ENCODE measurements at regions of chr12 and their contacts with region 1.

Region 1: GRCh38 chr12:108514973-108515814 is at the start of gene FICD:
- DNase-seq: peak; percentile 96 to 100 (median 99)
- ATAC-seq: peak; percentile 93
- H3K4me3 ChIP-seq: peak within 1 kb of the TSS; percentile 99
- H3K4me3 Mint-ChIP-seq: peak within 1 kb of the TSS; percentile 96
- H3K27ac ChIP-seq: peak within 1 kb of the TSS; percentile 70 to 71
- H3K27ac Mint-ChIP-seq: peak within 1 kb of the TSS; percentile 87
- H3K4me1 ChIP-seq: peaks cover 34% of the 10 kb centered on the region
- H3K4me1 Mint-ChIP-seq: peaks cover 29% of the 10 kb centered on the region
- H3K27me3 ChIP-seq: no peaks in the 10 kb centered on the region
- H3K27me3 Mint-ChIP-seq: no peaks in the 10 kb centered on the region
- CTCF ChIP-seq: no peak
- total RNA-seq, gene FICD: 2.7 to 3.2 TPM

Region 2: DNA sequence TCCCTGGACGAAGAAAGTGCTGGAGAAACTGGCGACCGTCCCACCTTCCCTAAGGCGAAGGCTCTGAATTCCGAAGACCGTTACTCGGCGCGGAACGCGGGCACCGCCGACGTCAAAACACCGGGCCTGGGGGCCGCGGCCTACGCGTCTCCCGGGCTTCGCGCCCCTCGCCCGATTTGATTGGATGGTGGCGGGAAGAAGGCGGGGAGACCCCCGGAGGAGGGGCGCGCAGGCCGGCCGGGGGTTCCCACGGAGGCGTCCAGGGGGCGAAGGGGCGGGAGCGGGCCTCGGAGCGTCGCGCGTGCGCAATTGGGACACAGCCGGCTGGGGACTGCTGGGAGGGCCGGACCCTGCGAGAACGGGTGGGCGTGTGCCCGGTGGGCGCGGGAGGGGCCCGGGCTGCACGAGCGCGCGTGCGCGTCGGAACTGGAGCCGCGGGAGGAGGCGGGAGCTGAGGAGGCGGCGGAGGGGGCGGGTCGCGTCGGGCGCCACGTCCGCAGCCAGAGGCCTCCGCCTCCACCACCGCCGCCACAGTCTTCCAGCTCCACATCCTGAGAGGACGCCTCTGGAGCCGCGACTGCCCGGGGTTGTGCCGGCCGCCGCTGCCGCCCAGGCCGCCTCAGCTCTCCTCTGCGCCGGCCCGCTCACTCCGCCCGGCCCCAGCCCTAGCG is 1559.7 kb before region 1 on chr12 and contains the start of gene TMEM263:
- CTCF ChIA-PET with region 1: no interaction called
- POLR2A ChIA-PET with region 1: no interaction called
- intact Hi-C with region 1: loop called in 1 of 2 experiments (anchors 10 kb)
- DNase-seq: peak; percentile 74 to 97 (median 88)
- ATAC-seq: peak; percentile 73
- H3K4me3 ChIP-seq: peak within 1 kb of the TSS; percentile 77
- H3K4me3 Mint-ChIP-seq: peak within 1 kb of the TSS; percentile 98
- H3K27ac ChIP-seq: peak within 1 kb of the TSS; percentile 81 to 89
- H3K27ac Mint-ChIP-seq: peak within 1 kb of the TSS; percentile 98
- H3K4me1 ChIP-seq: peaks cover 13% of the 10 kb centered on the region
- H3K4me1 Mint-ChIP-seq: peaks cover 43% of the 10 kb centered on the region
- H3K27me3 ChIP-seq: no peaks in the 10 kb centered on the region
- H3K27me3 Mint-ChIP-seq: no peaks in the 10 kb centered on the region
- CTCF ChIP-seq: no peak
- total RNA-seq, gene TMEM263: 33.2 to 33.4 TPM

Region 3: GRCh38 chr12:107685360-107686248 is 829.6 kb before region 1 on chr12 and contains the start of gene PWP1:
- CTCF ChIA-PET with region 1: no interaction called
- POLR2A ChIA-PET with region 1: no interaction called
- intact Hi-C with region 1: loop called in 1 of 2 experiments (anchors 2 kb)
- DNase-seq: peak; percentile 91 to 99 (median 94)
- ATAC-seq: peak; percentile 90
- H3K4me3 ChIP-seq: peak within 1 kb of the TSS; percentile 99
- H3K4me3 Mint-ChIP-seq: peak within 1 kb of the TSS; percentile 97
- H3K27ac ChIP-seq: peak within 1 kb of the TSS; percentile 75 to 91
- H3K27ac Mint-ChIP-seq: peak within 1 kb of the TSS; percentile 94
- H3K4me1 ChIP-seq: peaks cover 24% of the 10 kb centered on the region
- H3K4me1 Mint-ChIP-seq: peaks cover 33% of the 10 kb centered on the region
- H3K27me3 ChIP-seq: no peaks in the 10 kb centered on the region
- H3K27me3 Mint-ChIP-seq: no peaks in the 10 kb centered on the region
- CTCF ChIP-seq: no peak
- total RNA-seq, gene PWP1: 24.1 to 24.2 TPM

Region 4: DNA sequence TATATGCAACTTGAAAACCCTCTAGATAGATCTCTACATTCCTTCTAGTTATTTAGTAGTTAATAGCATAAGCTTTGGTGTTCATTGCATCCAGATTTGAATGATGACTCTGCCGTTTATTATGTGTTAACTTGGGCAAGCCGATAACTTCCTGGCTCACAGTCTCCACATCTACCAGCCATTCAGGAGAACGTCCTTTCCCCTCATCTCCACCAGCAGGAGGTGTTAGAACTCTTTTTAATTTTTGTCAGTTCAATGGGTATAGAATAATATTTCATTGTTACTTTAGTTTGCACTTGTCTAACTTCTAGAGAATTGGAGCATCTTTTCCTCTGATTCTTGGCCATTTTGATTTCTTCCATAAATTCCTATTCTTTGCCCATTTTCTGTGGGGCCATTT is 416.1 kb before region 1 on chr12:
- CTCF ChIA-PET with region 1: no interaction called
- POLR2A ChIA-PET with region 1: no interaction called
- intact Hi-C with region 1: loop called (anchors 1 to 5 kb)
- DNase-seq: peak in 2 of 14 experiments; percentile 7 to 40
- ATAC-seq: no peak
- H3K4me3 ChIP-seq: no peak overlapping the region
- H3K4me3 Mint-ChIP-seq: no peak overlapping the region
- H3K27ac ChIP-seq: no peak overlapping the region
- H3K27ac Mint-ChIP-seq: no peak overlapping the region
- H3K4me1 ChIP-seq: no peaks in the 10 kb centered on the region
- H3K4me1 Mint-ChIP-seq: no peaks in the 10 kb centered on the region
- H3K27me3 ChIP-seq: peaks cover 0 to 2% of the 10 kb centered on the region in 2 experiments
- H3K27me3 Mint-ChIP-seq: peaks cover 41% of the 10 kb centered on the region
- CTCF ChIP-seq: no peak

Region 5: DNA sequence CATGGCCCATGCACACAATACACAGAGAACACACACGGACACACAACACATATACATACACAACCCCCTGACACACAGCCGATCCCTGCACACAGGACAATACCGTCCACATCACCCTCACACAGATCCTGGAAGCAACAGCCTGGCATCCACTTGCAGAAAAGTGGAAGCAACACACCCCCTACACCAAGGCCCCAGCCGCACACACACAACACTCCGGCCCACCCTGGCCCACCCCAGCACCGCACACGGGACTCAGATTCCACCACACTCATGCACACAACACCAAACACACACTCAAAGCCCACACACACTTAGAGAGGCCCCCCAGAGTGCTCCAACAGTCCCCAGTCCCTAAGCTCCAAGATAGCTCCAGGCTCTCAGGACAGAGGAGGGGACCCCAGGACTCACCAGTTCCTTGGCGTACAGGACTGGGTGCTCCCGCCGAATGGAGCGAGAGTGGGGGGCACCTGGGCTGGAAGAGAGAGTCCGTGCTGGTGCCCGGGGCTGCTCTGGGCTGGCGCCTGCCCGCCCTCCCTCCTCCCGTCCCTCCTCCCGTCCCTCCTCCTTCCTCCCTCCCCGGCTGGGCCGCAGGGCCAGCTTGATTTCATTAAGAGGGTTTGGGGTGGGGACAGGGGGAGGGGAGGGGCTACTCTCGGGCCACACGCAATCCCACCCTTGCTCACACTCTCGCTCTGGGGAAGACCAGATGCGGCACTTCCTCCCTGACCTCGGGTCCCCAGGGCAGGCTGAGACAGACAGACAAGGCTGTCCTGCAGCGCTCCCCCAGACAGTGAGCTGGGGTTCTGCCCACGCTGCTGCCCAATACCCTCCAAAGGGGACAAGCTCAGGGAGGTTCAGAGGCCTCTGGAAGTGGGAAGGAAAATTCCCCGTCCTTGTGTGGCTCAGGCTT is 82.6 kb after region 1 on chr12 and contains the start of gene TMEM119:
- CTCF ChIA-PET with region 1: no interaction called
- POLR2A ChIA-PET with region 1: no interaction called
- intact Hi-C with region 1: no loop called
- DNase-seq: no peak
- ATAC-seq: no peak
- H3K4me3 ChIP-seq: no peak within 1 kb of the TSS
- H3K4me3 Mint-ChIP-seq: no peak within 1 kb of the TSS
- H3K27ac ChIP-seq: no peak within 1 kb of the TSS
- H3K27ac Mint-ChIP-seq: no peak within 1 kb of the TSS
- H3K4me1 ChIP-seq: no peaks in the 10 kb centered on the region
- H3K4me1 Mint-ChIP-seq: no peaks in the 10 kb centered on the region
- H3K27me3 ChIP-seq: no peaks in the 10 kb centered on the region
- H3K27me3 Mint-ChIP-seq: no peaks in the 10 kb centered on the region
- CTCF ChIP-seq: no peak
- total RNA-seq, gene TMEM119: 2.1 to 2.6 TPM

Region 6: GRCh38 chr12:108803428-108804105 is 288.4 kb after region 1 on chr12:
- CTCF ChIA-PET with region 1: no interaction called
- POLR2A ChIA-PET with region 1: no interaction called
- intact Hi-C with region 1: loop called in 1 of 2 experiments (anchors 5 kb)
- DNase-seq: peak; percentile 39 to 87 (median 58)
- ATAC-seq: peak; percentile 96
- H3K4me3 ChIP-seq: no peak overlapping the region
- H3K4me3 Mint-ChIP-seq: no peak overlapping the region
- H3K27ac ChIP-seq: no peak overlapping the region
- H3K27ac Mint-ChIP-seq: no peak overlapping the region
- H3K4me1 ChIP-seq: peaks cover 4% of the 10 kb centered on the region
- H3K4me1 Mint-ChIP-seq: peaks cover 4% of the 10 kb centered on the region
- H3K27me3 ChIP-seq: no peaks in the 10 kb centered on the region
- H3K27me3 Mint-ChIP-seq: no peaks in the 10 kb centered on the region
- CTCF ChIP-seq: peak; percentile 94

Region 7: GRCh38 chr12:109154451-109155438 is 639.6 kb after region 1 on chr12:
- CTCF ChIA-PET with region 1: no interaction called
- POLR2A ChIA-PET with region 1: no interaction called
- intact Hi-C with region 1: loop called in 1 of 2 experiments (anchors 5 kb)
- DNase-seq: peak; percentile 71 to 90 (median 78)
- ATAC-seq: peak; percentile 95
- H3K4me3 ChIP-seq: peak overlapping the region; percentile 75
- H3K4me3 Mint-ChIP-seq: peak overlapping the region; percentile 96
- H3K27ac ChIP-seq: peak overlapping the region in 1 of 2 donors; percentile 17
- H3K27ac Mint-ChIP-seq: peak overlapping the region; percentile 93
- H3K4me1 ChIP-seq: peaks cover 16% of the 10 kb centered on the region
- H3K4me1 Mint-ChIP-seq: peaks cover 21% of the 10 kb centered on the region
- H3K27me3 ChIP-seq: no peaks in the 10 kb centered on the region
- H3K27me3 Mint-ChIP-seq: no peaks in the 10 kb centered on the region
- CTCF ChIP-seq: no peak

Measured in CD4-positive, alpha-beta T cell (primary cell).